Posterior vena cava (tissue), 2 donors: ENCODE measurements at regions of chr4 and their contacts with region 1.

Region 1: DNA sequence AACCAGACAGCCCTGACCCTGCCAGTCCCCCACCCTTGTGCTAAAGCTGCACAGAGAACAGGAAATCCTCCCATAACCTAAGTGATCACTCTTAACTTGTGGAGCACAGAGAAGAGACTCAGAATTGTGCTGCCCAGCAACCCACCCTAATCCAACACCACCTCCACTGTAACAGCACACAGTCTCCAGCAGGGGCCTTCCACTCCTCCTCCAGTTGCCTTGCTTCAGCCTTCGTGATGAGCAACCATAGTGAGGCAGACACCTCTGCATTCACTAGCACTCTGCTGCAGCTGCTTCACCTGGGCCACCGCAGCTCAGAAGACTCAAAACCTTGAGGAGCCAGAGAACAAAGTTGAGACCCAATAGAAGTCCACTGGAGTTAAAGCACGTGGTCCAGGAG is 7.9 kb upstream of the UGT2B4 start:
- DNase-seq: no peak

Region 2: GRCh38 chr4:69490271-69490670 is 13.3 kb before region 1 on chr4:
- intact Hi-C with region 1: loop called in 1 of 2 experiments (anchors 2 kb)
- DNase-seq: no peak